B cell (primary cell): ENCODE measurements at regions of chr16 and their contacts with region 1.

Region 1: GRCh38 chr16:27972500-27972899 is 91.0 kb downstream of the GSG1L start:
- DNase-seq: peak; percentile 47
- ATAC-seq: peak; percentile 41
- H3K4me3 ChIP-seq: no peak overlapping the region
- H3K4me3 Mint-ChIP-seq: no peak overlapping the region
- H3K27ac ChIP-seq: no peak overlapping the region
- H3K27ac Mint-ChIP-seq: no peak overlapping the region
- H3K4me1 ChIP-seq: peaks cover 0 to 4% of the 10 kb centered on the region in 2 donors
- H3K4me1 Mint-ChIP-seq: peaks cover 3% of the 10 kb centered on the region
- H3K27me3 ChIP-seq: peaks cover 0 to 5% (median 0%) of the 10 kb centered on the region in 4 experiments
- H3K27me3 Mint-ChIP-seq: peaks cover 23% of the 10 kb centered on the region
- CTCF ChIP-seq: peak; percentile 39

Region 2: DNA sequence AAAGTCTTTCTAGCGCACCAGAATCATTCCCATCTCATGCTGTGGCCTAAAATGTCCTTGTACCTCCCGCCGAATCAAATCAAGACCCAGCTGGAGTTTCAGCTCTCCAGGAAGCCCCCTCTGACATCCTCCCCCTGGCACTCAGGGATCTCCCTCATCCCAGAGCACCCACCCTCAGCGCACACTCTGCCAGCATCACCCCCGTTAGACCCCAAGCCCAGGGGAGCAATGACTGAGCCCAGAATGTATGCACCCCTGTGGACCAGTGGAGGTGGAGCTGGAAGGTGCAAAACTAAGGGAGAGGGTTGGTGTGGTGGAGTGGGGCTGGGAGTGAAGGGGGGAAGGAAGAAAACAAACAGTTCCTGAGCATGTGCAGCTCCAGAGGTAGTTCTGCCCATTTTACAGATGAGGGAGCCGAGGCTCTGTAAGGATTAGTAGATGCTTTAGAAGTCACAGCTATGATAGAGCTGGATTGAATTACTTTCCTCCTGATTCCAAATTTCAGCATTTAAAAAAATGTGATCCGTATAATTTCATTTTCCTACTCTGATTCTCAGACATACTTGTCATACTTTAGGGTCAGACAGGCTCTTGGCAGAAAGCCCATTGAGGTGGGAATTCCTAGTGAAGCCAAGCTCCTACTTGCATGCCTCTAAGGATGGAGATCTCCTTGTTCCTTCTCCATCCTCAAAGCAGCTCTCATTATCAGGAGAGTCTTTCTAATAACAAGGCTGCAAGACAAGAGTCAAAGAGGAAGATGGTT is 179.8 kb before region 1 on chr16:
- CTCF ChIA-PET with region 1: no interaction called
- POLR2A ChIA-PET with region 1: no interaction called
- intact Hi-C with region 1: no loop called
- DNase-seq: no peak
- ATAC-seq: no peak
- H3K4me3 ChIP-seq: no peak overlapping the region
- H3K4me3 Mint-ChIP-seq: no peak overlapping the region
- H3K27ac ChIP-seq: no peak overlapping the region
- H3K27ac Mint-ChIP-seq: no peak overlapping the region
- H3K4me1 ChIP-seq: no peaks in the 10 kb centered on the region
- H3K4me1 Mint-ChIP-seq: no peaks in the 10 kb centered on the region
- H3K27me3 ChIP-seq: peaks cover 0 to 5% (median 1%) of the 10 kb centered on the region in 4 experiments
- H3K27me3 Mint-ChIP-seq: no peaks in the 10 kb centered on the region
- CTCF ChIP-seq: no peak

Region 3: DNA sequence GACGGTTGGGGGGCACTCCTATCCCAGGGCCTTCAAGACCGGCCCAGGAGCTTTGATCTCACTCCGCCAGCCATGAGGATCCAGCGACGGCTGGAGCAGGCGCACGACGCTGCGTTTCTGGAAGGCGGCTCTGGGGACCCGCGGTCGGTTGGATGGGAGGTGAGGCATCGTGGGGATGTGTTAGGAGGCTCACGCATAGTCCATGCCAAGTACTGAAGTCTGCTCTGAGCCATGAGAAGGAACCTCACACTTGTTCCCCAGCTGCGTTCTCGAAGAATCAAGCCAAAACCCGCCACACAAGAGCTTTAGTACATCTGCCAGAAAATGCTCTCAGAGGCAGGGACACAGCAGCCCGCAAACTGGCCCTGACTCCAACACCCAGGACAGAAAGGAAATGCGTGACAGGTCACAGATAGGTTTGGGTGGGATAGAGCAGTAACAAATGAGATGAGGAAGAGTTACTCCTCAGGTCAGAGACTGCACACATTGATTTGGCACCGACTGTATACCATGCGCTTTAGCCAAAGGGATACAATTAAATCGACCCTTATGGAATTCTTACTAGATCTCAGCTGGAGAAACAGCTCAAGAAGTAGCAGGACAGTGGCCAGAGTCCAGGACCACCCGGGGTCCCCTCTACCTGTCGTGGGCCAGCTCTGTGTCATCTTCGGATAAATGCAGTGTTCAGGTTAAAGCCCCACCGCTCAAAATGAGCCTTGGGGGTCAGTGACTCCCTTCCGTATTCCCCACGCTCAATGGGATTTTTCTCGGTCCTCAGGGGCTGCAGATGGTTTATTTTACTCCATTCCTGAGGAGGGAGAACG is 97.7 kb after region 1 on chr16:
- CTCF ChIA-PET with region 1: interaction called, 14 read pairs
- POLR2A ChIA-PET with region 1: no interaction called
- intact Hi-C with region 1: no loop called
- DNase-seq: no peak
- ATAC-seq: no peak
- H3K4me3 ChIP-seq: no peak overlapping the region
- H3K4me3 Mint-ChIP-seq: no peak overlapping the region
- H3K27ac ChIP-seq: no peak overlapping the region
- H3K27ac Mint-ChIP-seq: no peak overlapping the region
- H3K4me1 ChIP-seq: no peaks in the 10 kb centered on the region
- H3K4me1 Mint-ChIP-seq: no peaks in the 10 kb centered on the region
- H3K27me3 ChIP-seq: no peaks in the 10 kb centered on the region
- H3K27me3 Mint-ChIP-seq: peaks cover 24% of the 10 kb centered on the region
- CTCF ChIP-seq: no peak

Region 4: DNA sequence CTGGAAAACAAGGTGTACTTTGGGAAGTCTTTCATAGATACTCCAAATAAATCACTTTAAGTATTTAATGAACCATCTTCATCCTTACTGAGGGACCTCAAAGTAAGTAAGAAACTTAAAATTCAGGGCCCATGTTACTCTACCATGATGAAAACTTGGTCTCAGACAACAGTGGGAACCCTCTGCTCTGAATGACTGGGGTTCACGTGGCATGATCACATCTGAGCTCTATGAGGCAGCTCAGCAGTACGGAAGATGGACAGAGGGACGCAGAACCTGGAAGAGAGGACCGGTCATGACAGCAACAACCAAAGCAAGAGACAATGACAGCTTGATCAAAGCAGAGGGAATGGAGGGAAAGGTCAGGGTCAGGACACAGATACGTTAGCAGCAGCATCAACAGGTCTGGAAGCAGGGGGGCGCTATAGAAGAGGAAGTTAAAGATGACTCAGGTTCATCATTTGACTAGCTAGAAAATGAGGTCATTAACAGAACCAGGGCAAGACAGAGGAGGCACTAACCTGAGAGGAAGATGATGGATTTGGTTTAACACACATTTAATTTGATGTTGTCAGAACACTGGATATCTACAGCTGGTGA is 229.7 kb after region 1 on chr16:
- CTCF ChIA-PET with region 1: no interaction called
- POLR2A ChIA-PET with region 1: no interaction called
- intact Hi-C with region 1: no loop called
- DNase-seq: peak; percentile 32
- ATAC-seq: peak; percentile 57
- H3K4me3 ChIP-seq: no peak overlapping the region
- H3K4me3 Mint-ChIP-seq: peak overlapping the region; percentile 4
- H3K27ac ChIP-seq: peak overlapping the region in 1 of 2 donors; percentile 70
- H3K27ac Mint-ChIP-seq: peak overlapping the region; percentile 57
- H3K4me1 ChIP-seq: peaks cover 31 to 37% of the 10 kb centered on the region in 2 donors
- H3K4me1 Mint-ChIP-seq: peaks cover 23% of the 10 kb centered on the region
- H3K27me3 ChIP-seq: no peaks in the 10 kb centered on the region
- H3K27me3 Mint-ChIP-seq: no peaks in the 10 kb centered on the region
- CTCF ChIP-seq: peak; percentile 15